ENCODE measurements at regions of chr1 and their contacts with region 1.

Region 1: GRCh38 chr1:150841626-150842025 is 33.6 kb upstream of the CTSK start:
- DNase-seq: peak in 3 of 14 experiments; percentile 53 to 62 (median 56)
- ATAC-seq: peak; percentile 87
- H3K4me3 ChIP-seq: no peak overlapping the region
- H3K4me3 Mint-ChIP-seq: no peak overlapping the region
- H3K27ac ChIP-seq: no peak overlapping the region
- H3K27ac Mint-ChIP-seq: peak overlapping the region; percentile 77
- H3K4me1 ChIP-seq: peaks cover 8% of the 10 kb centered on the region
- H3K4me1 Mint-ChIP-seq: peaks cover 29% of the 10 kb centered on the region
- H3K27me3 ChIP-seq: no peaks in the 10 kb centered on the region
- H3K27me3 Mint-ChIP-seq: no peaks in the 10 kb centered on the region
- CTCF ChIP-seq: no peak

Region 2: GRCh38 chr1:150876119-150876454 is 34.5 kb after region 1 on chr1:
- CTCF ChIA-PET with region 1: no interaction called
- POLR2A ChIA-PET with region 1: no interaction called
- intact Hi-C with region 1: loop called in 1 of 2 experiments (anchors 5 kb)
- DNase-seq: no peak
- ATAC-seq: no peak
- H3K4me3 ChIP-seq: peak overlapping the region; percentile 79
- H3K4me3 Mint-ChIP-seq: peak overlapping the region; percentile 98
- H3K27ac ChIP-seq: peak overlapping the region; percentile 68 to 86
- H3K27ac Mint-ChIP-seq: peak overlapping the region; percentile 92
- H3K4me1 ChIP-seq: peaks cover 15% of the 10 kb centered on the region
- H3K4me1 Mint-ChIP-seq: peaks cover 43% of the 10 kb centered on the region
- H3K27me3 ChIP-seq: no peaks in the 10 kb centered on the region
- H3K27me3 Mint-ChIP-seq: no peaks in the 10 kb centered on the region
- CTCF ChIP-seq: no peak

Region 3: GRCh38 chr1:150887018-150887417 is 45.4 kb after region 1 on chr1 and contains the start of gene CTXND2:
- CTCF ChIA-PET with region 1: no interaction called
- POLR2A ChIA-PET with region 1: no interaction called
- intact Hi-C with region 1: loop called in 1 of 2 experiments (anchors 5 kb)
- DNase-seq: no peak
- ATAC-seq: no peak
- H3K4me3 ChIP-seq: no peak within 1 kb of the TSS
- H3K4me3 Mint-ChIP-seq: no peak within 1 kb of the TSS
- H3K27ac ChIP-seq: no peak within 1 kb of the TSS
- H3K27ac Mint-ChIP-seq: no peak within 1 kb of the TSS
- H3K4me1 ChIP-seq: peaks cover 10% of the 10 kb centered on the region
- H3K4me1 Mint-ChIP-seq: peaks cover 29% of the 10 kb centered on the region
- H3K27me3 ChIP-seq: no peaks in the 10 kb centered on the region
- H3K27me3 Mint-ChIP-seq: no peaks in the 10 kb centered on the region
- CTCF ChIP-seq: no peak
- total RNA-seq, gene CTXND2: not detected